ENCODE measurements at regions of chr1 and their contacts with region 1.

Region 1: GRCh38 chr1:169711469-169712281 is at the start of gene SELL:
- DNase-seq: peak; percentile 90
- ATAC-seq: peak; percentile 79
- H3K4me3 ChIP-seq: peak within 1 kb of the TSS; percentile 45
- H3K27ac ChIP-seq: peak within 1 kb of the TSS; percentile 49
- H3K4me1 ChIP-seq: peaks cover 4% of the 10 kb centered on the region; the same call in 1 of the 2 replicates
- H3K27me3 ChIP-seq: no peaks in the 10 kb centered on the region
- CTCF ChIP-seq: peak; percentile 91 to 98 (median 95)
- EP300 ChIP-seq: no peak
- POLR2A ChIP-seq: peak; percentile 44; the same call in 1 of the 2 replicates
- RAD21 ChIP-seq: peak; percentile 99
- polyA plus RNA-seq, gene SELL: 53.5 to 63.2 TPM

Region 2: GRCh38 chr1:169466259-169467230 is 245.1 kb before region 1 on chr1:
- CTCF ChIA-PET with region 1: interaction called, 3 read pairs
- POLR2A ChIA-PET with region 1: no interaction called
- RAD21 ChIA-PET with region 1: no interaction called
- SMC1A ChIA-PET with region 1: no interaction called
- in situ Hi-C with region 1: no loop called
- intact Hi-C with region 1: loop called (anchors 5 kb)
- DNase-seq: no peak
- ATAC-seq: peak; percentile 66
- H3K4me3 ChIP-seq: no peak overlapping the region
- H3K27ac ChIP-seq: no peak overlapping the region
- H3K4me1 ChIP-seq: no peaks in the 10 kb centered on the region
- H3K27me3 ChIP-seq: no peaks in the 10 kb centered on the region
- CTCF ChIP-seq: peak; percentile 24 to 47 (median 27); a peak in 3 of 6 replicates
- EP300 ChIP-seq: no peak
- POLR2A ChIP-seq: no peak
- RAD21 ChIP-seq: 0 out of 2 replicates have a peak, but pooled peaks have one; percentile 31

Region 3: GRCh38 chr1:169557131-169557530 is 154.5 kb before region 1 on chr1:
- CTCF ChIA-PET with region 1: interaction called, 51 read pairs
- POLR2A ChIA-PET with region 1: no interaction called
- RAD21 ChIA-PET with region 1: interaction called, 28 read pairs
- SMC1A ChIA-PET with region 1: interaction called, 25 read pairs
- in situ Hi-C with region 1: no loop called
- intact Hi-C with region 1: no loop called
- DNase-seq: no peak
- ATAC-seq: no peak
- H3K4me3 ChIP-seq: no peak overlapping the region
- H3K27ac ChIP-seq: no peak overlapping the region
- H3K4me1 ChIP-seq: no peaks in the 10 kb centered on the region
- H3K27me3 ChIP-seq: no peaks in the 10 kb centered on the region
- CTCF ChIP-seq: no peak
- EP300 ChIP-seq: no peak
- POLR2A ChIP-seq: no peak
- RAD21 ChIP-seq: no peak

Region 4: DNA sequence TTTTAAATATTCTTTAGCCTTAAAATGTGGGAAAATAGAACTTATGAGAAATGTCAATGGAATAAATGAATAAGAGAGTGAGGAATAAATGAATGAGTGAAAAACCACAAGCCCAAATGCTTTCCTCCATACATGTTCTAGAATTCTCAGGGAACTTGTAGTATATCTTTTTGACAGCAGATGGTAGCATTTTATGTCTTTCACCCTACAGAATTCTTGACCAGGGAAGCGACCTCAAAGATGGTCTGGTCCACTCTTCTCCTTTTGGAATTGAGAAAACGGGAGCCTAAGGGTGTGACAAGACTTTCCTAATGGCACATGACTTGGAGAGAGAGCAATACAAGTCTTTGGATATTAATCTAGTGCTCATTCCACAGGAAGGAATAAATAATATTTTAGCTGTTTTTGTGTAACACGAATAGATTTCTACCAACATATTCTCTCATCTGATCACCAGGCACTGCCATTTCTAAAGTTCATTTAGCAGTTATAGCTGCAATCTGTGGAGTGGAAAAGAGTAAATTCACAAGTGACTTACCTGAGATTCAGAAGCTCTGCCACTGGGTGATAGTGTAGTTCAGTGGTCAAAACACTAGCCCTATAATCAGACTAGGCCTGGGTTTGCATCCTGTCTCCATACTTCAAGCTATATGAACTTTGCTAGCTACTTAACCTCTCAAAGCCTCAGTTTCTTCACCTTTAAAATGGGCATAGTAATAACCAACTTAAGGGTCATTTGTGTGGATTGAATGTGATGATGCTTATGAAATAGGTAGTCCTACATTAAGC is 110.4 kb before region 1 on chr1:
- CTCF ChIA-PET with region 1: interaction called, 193 read pairs
- POLR2A ChIA-PET with region 1: interaction called, 10 read pairs
- RAD21 ChIA-PET with region 1: interaction called, 98 read pairs
- SMC1A ChIA-PET with region 1: interaction called, 154 read pairs
- in situ Hi-C with region 1: loop called (anchors 5 kb)
- intact Hi-C with region 1: loop called (anchors 1 kb)
- DNase-seq: peak; percentile 52
- ATAC-seq: peak; percentile 81
- H3K4me3 ChIP-seq: no peak overlapping the region
- H3K27ac ChIP-seq: no peak overlapping the region
- H3K4me1 ChIP-seq: peaks cover 10% of the 10 kb centered on the region
- H3K27me3 ChIP-seq: no peaks in the 10 kb centered on the region
- CTCF ChIP-seq: peak; percentile 42 to 73 (median 53); a peak in 5 of 6 replicates
- EP300 ChIP-seq: no peak
- POLR2A ChIP-seq: no peak
- RAD21 ChIP-seq: peak; percentile 87

Region 5: GRCh38 chr1:169680377-169681019 is 31.2 kb before region 1 on chr1:
- CTCF ChIA-PET with region 1: interaction called, 12 read pairs
- POLR2A ChIA-PET with region 1: no interaction called
- RAD21 ChIA-PET with region 1: interaction called, 19 read pairs
- SMC1A ChIA-PET with region 1: interaction called, 16 read pairs
- in situ Hi-C with region 1: no loop called
- intact Hi-C with region 1: no loop called
- DNase-seq: peak; percentile 73
- ATAC-seq: peak; percentile 88
- H3K4me3 ChIP-seq: peak overlapping the region; percentile 37
- H3K27ac ChIP-seq: peak overlapping the region; percentile 76
- H3K4me1 ChIP-seq: peaks cover 49% of the 10 kb centered on the region
- H3K27me3 ChIP-seq: no peaks in the 10 kb centered on the region
- CTCF ChIP-seq: no peak
- EP300 ChIP-seq: no peak
- POLR2A ChIP-seq: no peak
- RAD21 ChIP-seq: no peak

Region 6: DNA sequence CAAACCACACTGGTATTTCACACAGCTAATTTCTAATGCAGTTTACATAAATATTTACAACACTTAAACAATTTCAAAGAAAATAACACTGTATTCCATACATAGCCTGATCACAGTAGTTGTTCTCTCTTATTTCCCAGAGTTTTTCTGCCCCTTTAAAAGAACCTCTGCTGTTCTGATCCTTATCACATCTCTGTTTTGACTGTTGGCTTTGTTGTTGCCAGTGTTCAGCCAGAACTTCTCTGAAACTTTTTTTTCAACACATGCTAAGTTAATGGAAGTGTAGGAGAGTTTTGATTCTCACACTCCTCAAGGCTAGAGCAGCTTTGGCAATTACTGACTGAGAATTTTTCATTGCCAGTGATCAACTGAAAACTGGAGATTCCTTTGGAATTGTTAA is 11.1 kb after region 1 on chr1:
- CTCF ChIA-PET with region 1: interaction called, 10 read pairs
- POLR2A ChIA-PET with region 1: no interaction called
- RAD21 ChIA-PET with region 1: interaction called, 3 read pairs
- SMC1A ChIA-PET with region 1: interaction called, 6 read pairs
- in situ Hi-C with region 1: no loop called
- intact Hi-C with region 1: no loop called
- DNase-seq: no peak
- ATAC-seq: no peak
- H3K4me3 ChIP-seq: no peak overlapping the region
- H3K27ac ChIP-seq: no peak overlapping the region
- H3K4me1 ChIP-seq: no peaks in the 10 kb centered on the region
- H3K27me3 ChIP-seq: no peaks in the 10 kb centered on the region
- CTCF ChIP-seq: no peak
- EP300 ChIP-seq: no peak
- POLR2A ChIP-seq: no peak
- RAD21 ChIP-seq: no peak

Region 7: GRCh38 chr1:169809370-169810095 is 97.9 kb after region 1 on chr1:
- CTCF ChIA-PET with region 1: interaction called, 16 read pairs
- POLR2A ChIA-PET with region 1: interaction called, 3 read pairs
- RAD21 ChIA-PET with region 1: interaction called, 9 read pairs
- SMC1A ChIA-PET with region 1: interaction called, 13 read pairs
- in situ Hi-C with region 1: no loop called
- intact Hi-C with region 1: no loop called
- DNase-seq: no peak
- ATAC-seq: peak; percentile 77
- H3K4me3 ChIP-seq: no peak overlapping the region
- H3K27ac ChIP-seq: no peak overlapping the region
- H3K4me1 ChIP-seq: no peaks in the 10 kb centered on the region
- H3K27me3 ChIP-seq: no peaks in the 10 kb centered on the region
- CTCF ChIP-seq: peak; percentile 25 to 54 (median 51); a peak in 5 of 6 replicates
- EP300 ChIP-seq: no peak
- POLR2A ChIP-seq: no peak
- RAD21 ChIP-seq: peak; percentile 64

Region 8: GRCh38 chr1:169829671-169830070 is 118.0 kb after region 1 on chr1:
- CTCF ChIA-PET with region 1: no interaction called
- POLR2A ChIA-PET with region 1: no interaction called
- RAD21 ChIA-PET with region 1: no interaction called
- SMC1A ChIA-PET with region 1: no interaction called
- in situ Hi-C with region 1: no loop called
- intact Hi-C with region 1: no loop called
- DNase-seq: no peak
- ATAC-seq: no peak
- H3K4me3 ChIP-seq: no peak overlapping the region
- H3K27ac ChIP-seq: no peak overlapping the region
- H3K4me1 ChIP-seq: no peaks in the 10 kb centered on the region
- H3K27me3 ChIP-seq: no peaks in the 10 kb centered on the region
- CTCF ChIP-seq: no peak
- EP300 ChIP-seq: no peak
- POLR2A ChIP-seq: no peak
- RAD21 ChIP-seq: no peak

Measured in GM12878 (cell line).